ENCODE measurements at regions of chr1 and their contacts with region 1.

Region 1: GRCh38 chr1:2044510-2045319 is 5.5 kb upstream of the PRKCZ start:
- DNase-seq: peak; percentile 77
- H3K4me3 ChIP-seq: no peak overlapping the region
- H3K27ac ChIP-seq: no peak overlapping the region
- H3K4me1 ChIP-seq: peaks cover 19% of the 10 kb centered on the region
- H3K27me3 ChIP-seq: peaks cover 4% of the 10 kb centered on the region
- CTCF ChIP-seq: peak; percentile 83

Region 2: GRCh38 chr1:1943834-1944570 is 100.7 kb before region 1 on chr1:
- intact Hi-C with region 1: loop called (anchors 5 kb)
- DNase-seq: peak; percentile 48
- H3K4me3 ChIP-seq: no peak overlapping the region
- H3K27ac ChIP-seq: no peak overlapping the region
- H3K4me1 ChIP-seq: no peaks in the 10 kb centered on the region
- H3K27me3 ChIP-seq: no peaks in the 10 kb centered on the region
- CTCF ChIP-seq: peak; percentile 93